ENCODE measurements at regions of chr17 and their contacts with region 1.

Region 1: GRCh38 chr17:4599505-4600306 is 15.4 kb downstream of the SMTNL2 start:
- DNase-seq: peak; percentile 87 to 92
- H3K4me3 ChIP-seq: no peak overlapping the region
- H3K4me3 Mint-ChIP-seq: peak overlapping the region; percentile 53
- H3K27ac Mint-ChIP-seq: peak overlapping the region; percentile 87
- H3K4me1 ChIP-seq: peaks cover 28% of the 10 kb centered on the region
- H3K4me1 Mint-ChIP-seq: peaks cover 13% of the 10 kb centered on the region
- H3K27me3 ChIP-seq: no peaks in the 10 kb centered on the region
- H3K27me3 Mint-ChIP-seq: no peaks in the 10 kb centered on the region
- CTCF ChIP-seq: no peak

Region 2: GRCh38 chr17:4583782-4584100 is 16.0 kb before region 1 on chr17:
- CTCF ChIA-PET with region 1: no interaction called
- POLR2A ChIA-PET with region 1: interaction called, 10 read pairs
- intact Hi-C with region 1: no loop called
- DNase-seq: peak; percentile 76 to 77
- H3K4me3 ChIP-seq: peak overlapping the region; percentile 71
- H3K4me3 Mint-ChIP-seq: peak overlapping the region; percentile 84
- H3K27ac Mint-ChIP-seq: peak overlapping the region; percentile 75
- H3K4me1 ChIP-seq: peaks cover 19% of the 10 kb centered on the region; the same call in 1 of the 2 replicates
- H3K4me1 Mint-ChIP-seq: peaks cover 12% of the 10 kb centered on the region
- H3K27me3 ChIP-seq: no peaks in the 10 kb centered on the region
- H3K27me3 Mint-ChIP-seq: no peaks in the 10 kb centered on the region
- CTCF ChIP-seq: peak; percentile 26 to 45

Region 3: GRCh38 chr17:4610162-4610561 is 10.5 kb after region 1 on chr17:
- CTCF ChIA-PET with region 1: interaction called, 9 read pairs
- POLR2A ChIA-PET with region 1: interaction called, 28 read pairs
- intact Hi-C with region 1: loop called (anchors 1 kb)
- DNase-seq: peak; percentile 83 to 89
- H3K4me3 ChIP-seq: peak overlapping the region; percentile 45
- H3K4me3 Mint-ChIP-seq: peak overlapping the region; percentile 93
- H3K27ac Mint-ChIP-seq: peak overlapping the region; percentile 99
- H3K4me1 ChIP-seq: peaks cover 31% of the 10 kb centered on the region
- H3K4me1 Mint-ChIP-seq: peaks cover 6% of the 10 kb centered on the region
- H3K27me3 ChIP-seq: no peaks in the 10 kb centered on the region
- H3K27me3 Mint-ChIP-seq: no peaks in the 10 kb centered on the region
- CTCF ChIP-seq: no peak